Prostate gland (tissue), 2 donors: ENCODE measurements at regions of chr4 and their contacts with region 1.

Region 1: DNA sequence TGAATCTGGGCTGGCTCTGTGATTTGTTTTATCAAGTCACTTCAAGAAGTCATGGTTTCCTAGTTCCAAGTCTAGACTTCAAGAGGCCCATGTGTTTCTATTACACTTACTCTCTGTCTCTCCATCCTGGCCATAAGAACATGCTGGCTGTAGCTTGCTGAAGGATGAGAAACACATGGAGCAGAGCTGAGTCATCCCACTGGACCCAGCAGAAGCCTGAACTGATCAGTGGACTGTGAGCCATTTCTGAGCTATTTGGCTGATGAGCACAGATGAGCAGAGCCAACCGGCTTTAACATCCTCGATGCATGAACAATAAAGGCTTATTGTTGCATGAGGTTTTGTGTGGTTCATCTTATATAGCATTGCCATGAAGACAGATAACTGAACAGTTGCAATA is 290.6 kb upstream of the BOD1L1 start:
- DNase-seq: no peak
- H3K4me3 ChIP-seq: no peak overlapping the region
- H3K27ac ChIP-seq: no peak overlapping the region
- H3K4me1 ChIP-seq: no peaks in the 10 kb centered on the region
- H3K27me3 ChIP-seq: no peaks in the 10 kb centered on the region
- CTCF ChIP-seq: no peak
- POLR2A ChIP-seq: no peak

Region 2: GRCh38 chr4:14111730-14112181 is 193.6 kb after region 1 on chr4:
- intact Hi-C with region 1: loop called (anchors 10 kb)
- DNase-seq: peak; percentile 70
- H3K4me3 ChIP-seq: peak overlapping the region in 1 of 2 donors; percentile 5
- H3K27ac ChIP-seq: no peak overlapping the region
- H3K4me1 ChIP-seq: peaks cover 3% of the 10 kb centered on the region
- H3K27me3 ChIP-seq: no peaks in the 10 kb centered on the region
- CTCF ChIP-seq: no peak
- POLR2A ChIP-seq: no peak